OCI-LY7 (cell line): ENCODE measurements at regions of chr13 and their contacts with region 1.

Region 1: DNA sequence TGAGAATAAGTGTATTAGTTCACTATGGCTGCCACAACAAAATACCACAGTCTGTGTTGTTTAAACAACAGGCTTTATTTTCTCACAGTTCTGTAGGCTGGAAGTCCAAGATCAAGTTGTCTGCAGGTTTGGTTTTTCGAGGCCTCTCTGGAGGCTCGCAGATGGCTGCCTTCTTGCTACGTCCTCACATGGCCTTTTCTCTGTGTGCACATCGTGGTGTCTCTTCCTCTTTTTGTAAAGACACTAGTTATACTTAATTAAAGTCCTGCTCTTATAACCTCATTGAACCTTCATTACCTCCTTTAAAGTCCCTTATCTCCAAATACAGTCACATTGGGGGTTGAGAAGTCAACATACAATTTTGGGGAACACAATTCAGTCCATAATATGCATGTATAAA is 10.6 kb downstream of the CSNK1A1L start:
- DNase-seq: no peak
- H3K4me3 ChIP-seq: no peak overlapping the region
- H3K27ac ChIP-seq: no peak overlapping the region
- H3K4me1 ChIP-seq: no peaks in the 10 kb centered on the region
- CTCF ChIP-seq: no peak

Region 2: DNA sequence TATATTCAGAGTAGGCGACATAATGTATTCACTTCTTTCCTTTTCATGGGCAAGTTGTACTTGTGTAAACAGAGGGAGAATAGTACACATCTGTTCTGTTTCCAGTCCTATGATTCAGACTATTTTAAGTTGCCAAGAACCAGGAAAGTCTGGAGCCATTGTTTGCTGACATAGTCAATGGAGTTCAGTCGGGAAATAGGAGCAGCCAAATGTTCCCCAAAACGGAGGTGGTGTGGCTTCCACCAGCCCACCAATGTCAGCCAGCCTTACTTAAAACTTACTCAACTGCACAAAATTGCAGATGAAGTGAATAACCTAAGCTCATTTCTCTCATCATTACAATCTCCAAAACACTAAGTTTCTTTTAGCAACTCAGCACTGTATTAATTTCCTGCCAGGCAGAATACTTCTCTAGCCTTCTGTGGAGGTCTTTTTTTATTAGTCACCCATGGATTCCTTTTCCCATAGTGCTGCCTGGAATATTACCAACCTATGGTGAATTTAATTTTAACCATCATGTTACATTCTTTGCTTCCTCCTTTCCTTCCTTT is 32.9 kb after region 1 on chr13:
- CTCF ChIA-PET with region 1: no interaction called
- POLR2A ChIA-PET with region 1: no interaction called
- intact Hi-C with region 1: loop called (anchors 1 kb)
- DNase-seq: no peak
- H3K4me3 ChIP-seq: no peak overlapping the region
- H3K27ac ChIP-seq: no peak overlapping the region
- H3K4me1 ChIP-seq: no peaks in the 10 kb centered on the region
- CTCF ChIP-seq: no peak